Lower lobe of right lung (tissue), 2 donors: ENCODE measurements at regions of chr20 and their contacts with region 1.

Region 1: GRCh38 chr20:58209652-58210397 is 18.6 kb downstream of the ANKRD60 start:
- DNase-seq: peak; percentile 91
- ATAC-seq: peak; percentile 91 to 92
- H3K4me3 ChIP-seq: no peak overlapping the region
- H3K27ac ChIP-seq: no peak overlapping the region
- H3K4me1 ChIP-seq: no peaks in the 10 kb centered on the region
- H3K27me3 ChIP-seq: peaks cover 9% of the 10 kb centered on the region
- CTCF ChIP-seq: peak; percentile 100

Region 2: GRCh38 chr20:57514273-57514751 is 695.5 kb before region 1 on chr20:
- intact Hi-C with region 1: loop called (anchors 5 kb)
- DNase-seq: peak; percentile 65
- ATAC-seq: peak; percentile 82
- H3K4me3 ChIP-seq: no peak overlapping the region
- H3K27ac ChIP-seq: no peak overlapping the region
- H3K4me1 ChIP-seq: peaks cover 20% of the 10 kb centered on the region
- H3K27me3 ChIP-seq: no peaks in the 10 kb centered on the region
- CTCF ChIP-seq: peak; percentile 81

Region 3: DNA sequence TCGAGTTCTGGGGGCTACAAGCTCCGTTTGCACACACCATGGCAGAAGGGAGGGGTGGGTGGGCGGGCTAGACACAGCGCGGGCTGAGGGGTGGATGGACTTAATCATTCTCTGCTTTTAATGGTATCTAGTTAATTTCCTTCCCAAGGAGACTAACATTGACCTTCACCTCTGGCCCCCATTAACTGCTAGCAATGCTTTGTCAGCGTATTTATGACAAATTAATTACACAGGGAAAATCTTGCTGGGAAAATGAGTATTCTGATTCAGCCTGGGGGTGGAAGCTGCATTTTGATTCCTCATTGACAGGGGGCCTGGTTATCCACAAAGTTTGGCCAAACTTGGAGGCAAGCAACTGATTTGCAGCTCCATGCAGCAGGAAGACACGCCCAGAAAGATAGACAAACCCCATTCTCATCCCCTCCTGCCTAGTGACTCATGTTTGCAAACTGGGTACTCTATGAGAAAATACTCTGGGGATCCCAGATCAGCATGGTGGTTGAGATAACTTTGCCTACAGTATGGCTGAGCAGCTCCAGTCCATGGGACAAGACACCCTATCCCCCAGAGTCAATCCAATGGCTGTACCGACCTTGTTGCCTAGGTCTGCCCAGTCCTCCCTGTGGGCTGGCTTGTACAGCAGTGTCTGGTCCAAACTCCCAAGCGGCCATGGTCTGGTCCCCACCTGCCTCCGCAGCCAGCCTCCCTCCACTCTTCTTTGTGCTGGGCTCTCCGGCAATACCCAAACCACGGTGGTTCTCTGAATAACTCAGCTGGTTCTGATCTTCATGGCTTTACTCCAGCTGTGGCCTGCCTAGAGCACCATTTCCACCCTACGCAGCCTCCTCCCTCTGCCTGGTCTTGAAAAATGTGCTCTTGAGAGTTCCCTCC is 609.3 kb before region 1 on chr20:
- intact Hi-C with region 1: loop called (anchors 10 kb)
- DNase-seq: peak; percentile 13
- ATAC-seq: no peak
- H3K4me3 ChIP-seq: no peak overlapping the region
- H3K27ac ChIP-seq: no peak overlapping the region
- H3K4me1 ChIP-seq: peaks cover 8% of the 10 kb centered on the region
- H3K27me3 ChIP-seq: no peaks in the 10 kb centered on the region
- CTCF ChIP-seq: no peak